ENCODE measurements at regions of chr3 and their contacts with region 1.

Region 1: GRCh38 chr3:48151058-48151806 is 37.0 kb downstream of the CDC25A start:
- DNase-seq: peak; percentile 75
- ATAC-seq: peak; percentile 97
- H3K4me3 ChIP-seq: no peak overlapping the region
- H3K27ac ChIP-seq: no peak overlapping the region
- H3K4me1 ChIP-seq: peaks cover 15 to 32% of the 10 kb centered on the region in 2 experiments
- H3K27me3 ChIP-seq: no peaks in the 10 kb centered on the region
- CTCF ChIP-seq: peak; percentile 74 to 92 (median 85); a peak in 5 of 6 replicates
- POLR2A ChIP-seq: no peak
- RAD21 ChIP-seq: peak; percentile 97

Region 2: DNA sequence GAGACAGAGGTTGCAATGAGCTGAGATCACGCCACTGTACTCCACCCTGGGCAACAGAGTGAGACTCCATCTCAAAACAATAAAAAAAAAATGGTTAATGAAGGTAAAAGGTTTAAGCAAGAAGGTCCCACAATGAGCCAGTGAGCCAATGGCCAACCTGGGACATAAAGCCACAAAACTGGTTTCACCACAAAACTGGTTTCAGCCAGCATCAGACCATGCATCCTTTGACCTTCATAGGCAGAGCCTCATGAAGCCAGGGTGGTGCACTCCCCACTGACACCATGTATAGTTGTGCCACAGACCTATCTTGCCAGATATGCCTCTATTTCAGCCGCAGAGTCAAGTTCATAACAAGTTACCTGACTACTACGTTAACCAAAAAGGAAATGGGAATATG is 717.4 kb before region 1 on chr3:
- CTCF ChIA-PET with region 1: no interaction called
- POLR2A ChIA-PET with region 1: no interaction called
- RAD21 ChIA-PET with region 1: no interaction called
- intact Hi-C with region 1: no loop called
- DNase-seq: no peak
- ATAC-seq: no peak
- H3K4me3 ChIP-seq: no peak overlapping the region
- H3K27ac ChIP-seq: no peak overlapping the region
- H3K4me1 ChIP-seq: peaks cover 7 to 8% of the 10 kb centered on the region in 2 experiments; a peak in 2 of 4 replicates
- H3K27me3 ChIP-seq: no peaks in the 10 kb centered on the region
- CTCF ChIP-seq: no peak
- POLR2A ChIP-seq: no peak
- RAD21 ChIP-seq: no peak

Region 3: DNA sequence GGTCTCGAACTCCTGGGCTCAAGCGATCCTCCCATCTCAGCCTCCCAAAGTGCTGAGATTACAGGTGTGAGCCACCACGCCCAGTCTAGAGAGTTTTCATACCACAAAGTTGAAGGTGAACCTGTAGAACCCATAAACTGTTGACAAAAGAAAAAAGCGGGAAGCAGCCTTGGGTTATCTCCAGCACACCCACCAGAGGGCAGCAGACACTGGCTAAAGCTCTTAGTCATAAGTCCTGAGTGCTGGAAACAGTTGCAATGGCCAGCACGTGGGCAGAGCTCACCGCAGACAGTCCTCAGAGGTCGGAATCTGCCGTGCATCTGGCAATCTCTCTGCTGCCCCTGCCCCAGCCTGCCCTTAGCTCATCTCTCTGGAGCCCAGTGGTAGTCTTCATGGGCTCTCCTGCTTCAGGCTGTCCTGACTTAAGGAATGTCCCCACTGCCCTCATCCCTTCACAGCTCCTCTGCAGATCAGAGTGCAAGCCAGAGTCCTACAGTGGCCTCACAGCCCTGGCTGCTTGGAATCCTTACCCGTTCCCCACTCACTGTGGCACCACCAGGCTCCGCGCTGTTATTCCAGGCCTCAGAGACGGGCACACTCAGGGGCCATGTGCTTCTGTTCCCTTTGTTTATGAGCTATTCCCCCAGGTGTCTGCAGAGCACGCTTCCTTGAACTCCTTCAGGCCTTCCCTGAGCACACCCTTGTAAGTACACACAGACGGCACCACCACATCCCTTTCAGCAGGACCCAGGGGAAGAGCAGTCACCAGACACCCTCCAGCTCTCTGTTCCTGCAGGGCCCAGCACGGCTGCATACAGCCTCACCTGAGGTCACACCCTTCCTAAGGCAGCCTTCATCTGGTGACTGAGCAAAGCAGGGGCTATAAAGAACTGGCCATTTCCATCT is 628.9 kb before region 1 on chr3:
- CTCF ChIA-PET with region 1: interaction called, 31 read pairs
- POLR2A ChIA-PET with region 1: no interaction called
- RAD21 ChIA-PET with region 1: interaction called in 1 of 2 experiments, 5 read pairs
- intact Hi-C with region 1: loop called (anchors 1 kb)
- DNase-seq: peak; percentile 91
- ATAC-seq: peak; percentile 92
- H3K4me3 ChIP-seq: no peak overlapping the region
- H3K27ac ChIP-seq: no peak overlapping the region
- H3K4me1 ChIP-seq: peaks cover 12 to 18% of the 10 kb centered on the region in 2 experiments
- H3K27me3 ChIP-seq: no peaks in the 10 kb centered on the region
- CTCF ChIP-seq: peak; percentile 79 to 96 (median 84)
- POLR2A ChIP-seq: no peak
- RAD21 ChIP-seq: peak; percentile 100

Region 4: DNA sequence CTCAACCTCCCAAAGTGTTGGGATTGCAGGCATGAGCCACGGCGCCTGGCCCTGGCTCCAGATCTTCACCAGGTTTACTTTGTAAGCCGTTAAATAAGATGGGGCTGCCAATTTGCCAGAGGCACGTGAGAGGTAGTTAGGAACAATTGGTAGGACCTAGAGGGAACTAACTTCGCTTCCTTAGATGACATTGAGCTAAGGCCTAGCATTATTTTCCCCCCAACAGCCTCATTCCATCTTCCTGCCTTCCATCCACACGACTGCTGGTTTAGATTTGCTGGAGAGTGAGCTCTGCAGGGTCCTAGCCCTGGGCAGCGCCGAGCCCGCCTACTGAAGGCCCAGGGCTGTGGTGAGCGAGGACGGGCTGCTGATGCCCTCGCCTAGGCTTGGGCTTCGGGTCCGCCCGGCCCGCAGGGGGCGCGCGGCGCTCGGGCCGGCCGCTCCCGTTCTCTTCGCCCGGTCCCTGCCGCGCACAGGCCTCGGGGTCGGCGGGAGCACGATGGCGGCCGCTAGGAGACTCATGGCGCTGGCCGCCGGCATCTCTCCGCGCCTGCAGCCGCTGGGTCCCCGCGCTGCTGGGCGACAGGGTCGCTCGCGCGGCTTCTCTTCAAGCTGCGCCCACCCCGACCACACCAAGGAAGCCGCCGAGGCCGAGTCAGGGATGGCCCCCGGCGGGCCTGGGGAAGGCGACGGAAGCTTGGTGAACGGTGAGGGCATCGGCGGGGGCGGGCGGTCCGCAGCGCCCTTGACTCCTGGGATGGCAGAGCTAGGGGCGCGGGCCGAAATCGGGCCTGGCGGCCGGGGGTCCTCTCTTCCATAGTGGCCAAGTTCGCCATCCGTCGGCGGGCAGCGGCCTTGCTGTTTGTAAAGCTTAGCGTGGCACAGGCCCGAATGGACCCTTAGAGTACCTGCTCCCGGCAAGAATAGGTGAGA is 326.4 kb before region 1 on chr3:
- CTCF ChIA-PET with region 1: interaction called, 13 read pairs
- POLR2A ChIA-PET with region 1: no interaction called
- RAD21 ChIA-PET with region 1: interaction called in 1 of 2 experiments, 5 read pairs
- intact Hi-C with region 1: no loop called
- DNase-seq: peak; percentile 47
- ATAC-seq: peak; percentile 98
- H3K4me3 ChIP-seq: peak overlapping the region; percentile 85 to 86
- H3K27ac ChIP-seq: peak overlapping the region; percentile 81
- H3K4me1 ChIP-seq: peaks cover 10 to 21% of the 10 kb centered on the region in 2 experiments; a peak in 3 of 4 replicates
- H3K27me3 ChIP-seq: no peaks in the 10 kb centered on the region
- CTCF ChIP-seq: peak; percentile 52 to 86 (median 72); a peak in 5 of 6 replicates
- POLR2A ChIP-seq: peak; percentile 48
- RAD21 ChIP-seq: peak; percentile 57

Region 5: DNA sequence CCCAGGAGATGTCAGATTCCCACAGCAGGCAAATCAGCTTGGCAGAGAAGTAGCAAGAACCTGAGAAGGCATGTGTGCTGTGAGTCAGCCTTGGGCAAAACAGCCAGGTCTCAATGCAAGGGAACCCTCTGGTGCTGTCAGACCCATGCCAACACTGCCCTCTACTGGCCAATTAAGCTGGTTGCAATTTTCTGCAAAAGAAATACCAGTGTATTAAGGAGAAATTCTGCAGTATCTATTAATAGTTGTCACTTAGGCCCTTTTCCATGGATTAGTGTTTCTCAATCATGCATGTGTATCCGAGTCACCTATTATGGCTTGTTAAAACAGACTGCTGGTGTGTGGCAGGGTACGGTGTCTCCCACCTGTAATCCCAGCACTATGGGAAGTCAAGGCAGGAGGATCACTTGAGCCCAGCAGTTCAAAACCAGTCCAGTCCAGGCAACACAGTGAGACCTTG is 161.2 kb before region 1 on chr3:
- CTCF ChIA-PET with region 1: interaction called, 13 read pairs
- POLR2A ChIA-PET with region 1: no interaction called
- RAD21 ChIA-PET with region 1: interaction called, 3 to 4 read pairs
- intact Hi-C with region 1: loop called (anchors 1 kb)
- DNase-seq: peak; percentile 69
- ATAC-seq: peak; percentile 97
- H3K4me3 ChIP-seq: no peak overlapping the region
- H3K27ac ChIP-seq: no peak overlapping the region
- H3K4me1 ChIP-seq: peaks cover 9 to 16% of the 10 kb centered on the region in 2 experiments; a peak in 3 of 4 replicates
- H3K27me3 ChIP-seq: no peaks in the 10 kb centered on the region
- CTCF ChIP-seq: peak; percentile 76 to 94 (median 85); a peak in 5 of 6 replicates
- POLR2A ChIP-seq: no peak
- RAD21 ChIP-seq: peak; percentile 95

Region 6: GRCh38 chr3:48140336-48140757 is 10.9 kb before region 1 on chr3:
- CTCF ChIA-PET with region 1: interaction called, 12 read pairs
- POLR2A ChIA-PET with region 1: no interaction called
- RAD21 ChIA-PET with region 1: interaction called, 3 read pairs
- intact Hi-C with region 1: no loop called
- DNase-seq: no peak
- ATAC-seq: no peak
- H3K4me3 ChIP-seq: no peak overlapping the region
- H3K27ac ChIP-seq: no peak overlapping the region
- H3K4me1 ChIP-seq: no peaks in the 10 kb centered on the region
- H3K27me3 ChIP-seq: no peaks in the 10 kb centered on the region
- CTCF ChIP-seq: no peak
- POLR2A ChIP-seq: no peak
- RAD21 ChIP-seq: no peak

Region 7: DNA sequence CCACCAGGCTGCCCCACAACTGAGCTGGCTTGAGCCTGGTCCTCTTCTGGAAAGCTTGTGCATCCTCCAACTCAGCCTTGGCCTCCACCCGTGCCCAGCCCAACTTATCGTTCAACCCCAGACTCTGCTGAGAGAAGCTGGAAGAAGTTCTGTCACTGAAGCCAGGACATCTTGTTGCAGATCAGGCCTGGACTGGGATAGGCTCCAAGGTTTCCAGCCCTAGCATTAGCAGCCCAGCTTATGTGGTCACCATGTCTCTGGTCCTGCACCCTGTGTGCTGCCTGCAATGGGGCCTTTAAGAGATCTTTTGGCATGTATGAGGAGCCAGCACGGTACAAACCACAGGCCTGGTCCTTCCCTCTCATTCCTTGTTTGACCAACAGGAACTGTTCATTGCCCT is 56.8 kb after region 1 on chr3:
- CTCF ChIA-PET with region 1: no interaction called
- POLR2A ChIA-PET with region 1: no interaction called
- RAD21 ChIA-PET with region 1: no interaction called
- intact Hi-C with region 1: no loop called
- DNase-seq: no peak
- ATAC-seq: no peak
- H3K4me3 ChIP-seq: no peak overlapping the region
- H3K27ac ChIP-seq: no peak overlapping the region
- H3K4me1 ChIP-seq: no peaks in the 10 kb centered on the region
- H3K27me3 ChIP-seq: no peaks in the 10 kb centered on the region
- CTCF ChIP-seq: no peak
- POLR2A ChIP-seq: no peak
- RAD21 ChIP-seq: no peak